ENCODE measurements at regions of chr17 and their contacts with region 1.

Region 1: DNA sequence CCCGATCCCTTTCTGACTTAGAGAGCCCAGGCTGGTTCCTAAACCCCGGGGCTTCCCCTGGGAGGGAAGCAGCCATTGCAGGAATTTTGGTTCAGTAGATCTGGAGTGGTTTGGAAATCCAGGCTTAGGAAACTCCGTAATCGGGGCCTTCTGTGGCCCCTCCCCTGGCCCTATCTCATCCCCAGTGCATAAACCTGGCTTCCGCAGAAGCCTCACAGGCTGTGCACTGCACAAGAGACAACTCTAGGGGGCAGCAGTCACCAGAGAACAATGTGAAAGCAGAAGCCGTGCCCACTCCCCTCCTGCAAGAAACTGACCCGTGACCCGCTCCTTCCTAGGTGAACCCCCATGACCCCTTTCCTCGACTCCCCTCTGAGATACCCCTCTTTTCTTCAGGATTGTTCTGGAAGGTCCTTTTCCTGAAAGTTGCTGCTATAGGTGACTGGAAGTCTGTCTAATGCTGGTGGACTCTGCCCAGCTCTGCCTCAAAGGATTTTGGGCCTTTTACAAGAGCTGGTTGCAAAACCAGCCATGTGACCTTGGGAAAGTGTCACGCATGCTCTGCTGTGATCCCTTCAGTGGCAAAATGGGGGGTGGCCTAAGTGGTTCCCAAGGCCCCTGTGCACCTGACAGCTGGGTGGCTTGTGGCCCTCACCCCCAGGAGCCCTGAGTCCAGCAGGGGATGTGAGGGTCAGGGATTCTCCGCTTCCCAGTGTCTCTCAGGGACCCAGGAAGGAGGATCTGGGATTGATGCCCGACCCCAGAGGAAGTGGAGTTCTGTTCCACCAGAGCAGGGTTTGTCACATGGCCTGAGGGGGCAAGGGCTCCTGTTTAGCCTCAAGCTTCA is 14.4 kb downstream of the GUCY2D start:
- H3K4me3 ChIP-seq: peak overlapping the region; percentile 40
- H3K27ac ChIP-seq: peak overlapping the region; percentile 49; the same call in 1 of the 2 replicates
- H3K4me1 ChIP-seq: no peaks in the 10 kb centered on the region
- CTCF ChIP-seq: peak; percentile 88

Region 2: DNA sequence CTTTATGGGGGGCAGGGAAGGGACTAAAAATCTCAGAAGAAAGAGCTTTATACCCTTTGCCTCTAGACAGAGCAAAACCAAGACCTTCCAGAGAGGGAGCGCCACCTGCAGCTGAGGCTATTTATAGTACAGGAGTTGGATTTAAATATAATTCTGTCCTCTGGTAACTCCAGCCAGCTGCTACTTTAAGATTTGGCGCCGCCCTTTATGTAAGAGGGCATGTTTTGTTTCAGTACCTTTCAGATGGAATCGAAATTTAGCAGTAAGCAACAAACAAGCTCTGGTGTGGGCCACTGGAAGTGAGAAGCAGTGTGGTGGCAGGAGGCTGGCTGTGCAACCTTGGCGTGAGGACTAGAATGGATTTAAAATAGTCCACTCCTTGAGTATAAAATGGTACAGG is 19.7 kb before region 1 on chr17:
- CTCF ChIA-PET with region 1: interaction called, 19 read pairs
- POLR2A ChIA-PET with region 1: no interaction called
- H3K4me3 ChIP-seq: no peak overlapping the region
- H3K27ac ChIP-seq: no peak overlapping the region
- H3K4me1 ChIP-seq: no peaks in the 10 kb centered on the region
- CTCF ChIP-seq: no peak

Region 3: DNA sequence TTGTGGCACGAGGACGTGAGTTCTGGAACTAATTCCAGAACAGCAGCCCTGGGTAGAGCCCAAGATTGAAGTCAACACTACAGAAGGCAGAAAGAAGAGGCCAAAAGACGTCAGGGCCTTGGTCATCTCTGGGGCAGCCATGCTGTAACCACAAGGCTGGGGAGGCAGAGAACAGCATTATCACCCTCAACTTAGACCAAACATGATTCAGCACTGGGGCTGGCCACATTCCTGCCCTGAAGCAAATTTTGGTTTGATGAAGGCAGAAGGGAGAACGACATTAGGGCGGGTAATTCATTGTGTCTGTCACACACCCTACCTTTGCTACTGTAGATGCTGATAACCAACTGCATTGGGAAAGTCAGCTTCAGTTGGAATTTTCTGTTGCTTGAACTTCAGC is 12.3 kb after region 1 on chr17:
- CTCF ChIA-PET with region 1: interaction called, 10 read pairs
- POLR2A ChIA-PET with region 1: no interaction called
- H3K4me3 ChIP-seq: no peak overlapping the region
- H3K27ac ChIP-seq: no peak overlapping the region
- H3K4me1 ChIP-seq: no peaks in the 10 kb centered on the region
- CTCF ChIP-seq: no peak

Region 4: DNA sequence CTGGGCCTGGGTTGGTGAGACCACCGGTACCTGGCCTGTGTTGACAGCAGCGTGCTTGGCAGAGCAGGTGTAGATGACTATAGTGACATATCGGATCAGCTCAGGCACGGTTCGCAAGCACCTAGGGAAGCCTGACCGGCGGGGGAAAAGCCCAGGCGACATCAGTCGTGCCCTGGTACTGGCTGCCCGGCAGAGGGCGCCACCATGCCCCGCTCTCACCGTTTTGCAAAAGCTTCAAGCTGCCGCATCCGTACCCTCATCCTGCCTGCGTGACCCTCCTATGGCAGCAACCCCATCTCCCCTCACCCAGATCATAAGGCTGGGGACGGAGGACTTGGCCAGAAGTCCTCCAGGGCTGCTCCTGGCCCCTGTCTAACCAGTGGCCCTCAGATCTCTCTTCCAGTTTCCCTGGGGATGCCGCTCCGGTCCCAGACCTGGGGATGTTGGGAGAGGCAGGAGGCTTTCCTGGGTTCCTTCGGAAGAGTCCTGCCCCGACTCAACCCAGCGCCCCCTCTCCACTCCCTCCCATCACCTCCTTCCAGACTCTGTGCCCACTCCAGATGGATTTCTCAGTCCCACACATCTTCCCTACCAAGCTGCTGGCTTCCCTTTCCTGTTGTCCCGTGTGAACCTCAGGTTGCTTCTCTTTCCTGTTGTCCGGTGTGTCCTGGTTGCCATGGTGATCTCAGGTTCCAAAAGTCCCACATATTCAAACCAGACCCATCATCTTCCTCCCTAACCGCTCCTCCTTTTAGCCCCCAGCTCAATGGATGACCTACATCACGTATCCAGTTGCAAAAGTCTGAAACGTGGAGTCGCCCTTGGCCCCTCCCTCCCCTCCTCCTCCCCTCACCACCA is 57.0 kb after region 1 on chr17:
- CTCF ChIA-PET with region 1: interaction called, 11 read pairs
- POLR2A ChIA-PET with region 1: no interaction called
- H3K4me3 ChIP-seq: peak overlapping the region; percentile 28
- H3K27ac ChIP-seq: no peak overlapping the region
- H3K4me1 ChIP-seq: no peaks in the 10 kb centered on the region
- CTCF ChIP-seq: peak; percentile 92